AG04450 (cell line): ENCODE measurements at regions of chr19 and their contacts with region 1.

Region 1: DNA sequence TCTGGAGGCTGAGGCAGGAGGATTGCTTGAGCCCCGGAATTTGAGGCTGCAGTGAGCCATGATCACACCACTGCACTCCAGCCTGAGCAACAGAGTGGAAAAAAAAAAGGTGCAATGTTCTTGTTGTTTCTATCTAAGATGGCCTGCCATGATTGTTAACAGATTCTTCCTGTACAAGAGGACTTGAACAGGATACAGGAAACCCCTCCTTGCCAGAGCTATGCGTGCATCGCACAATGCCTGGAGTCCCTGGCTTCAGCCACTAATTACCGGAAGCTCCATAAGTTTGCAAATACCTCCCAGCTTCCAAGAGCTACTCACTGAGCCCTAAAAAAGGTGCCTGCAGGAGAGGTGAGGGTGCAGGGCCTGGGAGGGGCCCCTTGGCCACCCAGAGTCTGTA is 13.1 kb upstream of the HIF3A start:
- DNase-seq: no peak
- H3K4me3 ChIP-seq: no peak overlapping the region
- H3K27ac ChIP-seq: no peak overlapping the region
- H3K27me3 ChIP-seq: peaks cover 4% of the 10 kb centered on the region
- CTCF ChIP-seq: no peak

Region 2: DNA sequence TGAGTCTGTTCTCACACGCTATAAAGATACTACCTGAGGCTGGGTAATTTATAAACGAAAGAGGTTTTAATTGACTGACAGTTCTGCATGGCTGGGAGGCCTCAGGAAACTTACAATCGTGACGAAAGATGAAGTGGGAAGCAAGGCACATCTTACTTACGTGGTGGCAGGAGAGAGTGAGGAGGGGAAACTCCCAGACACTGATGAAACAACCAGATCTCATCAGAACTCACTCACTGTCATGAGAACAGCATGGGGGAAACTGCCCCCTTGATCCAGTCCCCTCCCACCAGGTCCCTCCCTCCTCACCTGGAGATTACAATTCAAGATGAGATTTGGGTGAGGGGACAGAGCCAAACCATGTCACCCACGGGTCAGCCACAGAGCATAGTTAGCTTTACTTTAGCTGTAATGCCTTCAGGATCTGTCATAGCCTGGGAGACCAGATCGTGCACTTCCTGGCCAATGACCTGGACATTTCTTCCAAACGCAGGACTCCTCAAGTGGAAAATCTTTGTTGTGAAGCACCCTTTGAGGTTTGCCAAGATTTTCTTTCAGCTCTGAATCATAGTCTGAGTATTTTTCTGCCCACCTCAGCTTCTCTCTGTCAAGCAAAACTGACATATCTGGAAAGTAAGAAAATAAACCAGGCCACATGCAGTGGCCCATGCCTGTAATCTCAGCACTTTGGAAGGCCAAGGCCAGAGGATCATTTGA is 12.1 kb before region 1 on chr19:
- CTCF ChIA-PET with region 1: interaction called, 13 read pairs
- POLR2A ChIA-PET with region 1: no interaction called
- DNase-seq: no peak
- H3K4me3 ChIP-seq: no peak overlapping the region
- H3K27ac ChIP-seq: no peak overlapping the region
- H3K27me3 ChIP-seq: peaks cover 9% of the 10 kb centered on the region
- CTCF ChIP-seq: no peak

Region 3: GRCh38 chr19:46346821-46347571 is 63.2 kb after region 1 on chr19 and contains the start of gene PPP5C:
- CTCF ChIA-PET with region 1: interaction called, 10 read pairs
- POLR2A ChIA-PET with region 1: interaction called, 7 read pairs
- DNase-seq: peak; percentile 72
- H3K4me3 ChIP-seq: peak within 1 kb of the TSS; percentile 99
- H3K27ac ChIP-seq: peak within 1 kb of the TSS; percentile 31
- H3K27me3 ChIP-seq: peaks cover 3% of the 10 kb centered on the region
- CTCF ChIP-seq: peak; percentile 95
- polyA plus RNA-seq, gene PPP5C: 73.7 and 85.9 TPM in 2 replicates

Region 4: GRCh38 chr19:46364359-46364758 is 80.6 kb after region 1 on chr19:
- CTCF ChIA-PET with region 1: interaction called, 10 read pairs
- POLR2A ChIA-PET with region 1: no interaction called
- DNase-seq: no peak
- H3K4me3 ChIP-seq: no peak overlapping the region
- H3K27ac ChIP-seq: no peak overlapping the region
- H3K27me3 ChIP-seq: no peaks in the 10 kb centered on the region
- CTCF ChIP-seq: no peak

Region 5: GRCh38 chr19:46513461-46514236 is 229.9 kb after region 1 on chr19:
- CTCF ChIA-PET with region 1: interaction called, 14 read pairs
- POLR2A ChIA-PET with region 1: no interaction called
- DNase-seq: no peak
- H3K4me3 ChIP-seq: no peak overlapping the region
- H3K27ac ChIP-seq: no peak overlapping the region
- H3K27me3 ChIP-seq: peaks cover 5% of the 10 kb centered on the region
- CTCF ChIP-seq: peak; percentile 70